ENCODE measurements at regions of chr19 and their contacts with region 1.

Region 1: GRCh38 chr19:10332955-10333757 is at the start of gene RAVER1:
- DNase-seq: peak; percentile 97 to 98 (median 98)
- H3K4me3 ChIP-seq: peak within 1 kb of the TSS; percentile 73 to 89
- H3K4me3 Mint-ChIP-seq: peak within 1 kb of the TSS; percentile 92 to 99 (median 96)
- H3K27ac ChIP-seq: peak within 1 kb of the TSS; percentile 88
- H3K27ac Mint-ChIP-seq: peak within 1 kb of the TSS; percentile 91 to 98 (median 97)
- H3K4me1 ChIP-seq: peaks cover 43% of the 10 kb centered on the region
- H3K4me1 Mint-ChIP-seq: peaks cover 7 to 57% (median 27%) of the 10 kb centered on the region in 4 donors
- H3K27me3 ChIP-seq: no peaks in the 10 kb centered on the region
- H3K27me3 Mint-ChIP-seq: no peaks in the 10 kb centered on the region
- total RNA-seq, gene RAVER1: 46.1 to 56.1 TPM

Region 2: GRCh38 chr19:9818734-9819589 is 514.2 kb before region 1 on chr19 and contains the start of gene FBXL12:
- CTCF ChIA-PET with region 1: no interaction called
- POLR2A ChIA-PET with region 1: no interaction called
- intact Hi-C with region 1: loop called (anchors 5 kb)
- DNase-seq: peak; percentile 100
- H3K4me3 ChIP-seq: peak within 1 kb of the TSS; percentile 95
- H3K4me3 Mint-ChIP-seq: peak within 1 kb of the TSS; percentile 89 to 95 (median 91)
- H3K27ac ChIP-seq: peak within 1 kb of the TSS; percentile 92
- H3K27ac Mint-ChIP-seq: peak within 1 kb of the TSS; percentile 86 to 97 (median 96)
- H3K4me1 ChIP-seq: peaks cover 19% of the 10 kb centered on the region
- H3K4me1 Mint-ChIP-seq: peaks cover 21 to 40% (median 34%) of the 10 kb centered on the region in 4 donors
- H3K27me3 ChIP-seq: no peaks in the 10 kb centered on the region
- H3K27me3 Mint-ChIP-seq: no peaks in the 10 kb centered on the region
- total RNA-seq, gene FBXL12: 27.8 to 30.7 TPM

Region 3: GRCh38 chr19:10106100-10106936 is 226.8 kb before region 1 on chr19 and contains the start of gene PPAN:
- CTCF ChIA-PET with region 1: no interaction called
- POLR2A ChIA-PET with region 1: no interaction called
- intact Hi-C with region 1: loop called (anchors 2 kb)
- DNase-seq: peak; percentile 96 to 98 (median 98)
- H3K4me3 ChIP-seq: peak within 1 kb of the TSS; percentile 58 to 74
- H3K4me3 Mint-ChIP-seq: peak within 1 kb of the TSS; percentile 72 to 92 (median 88)
- H3K27ac ChIP-seq: peak within 1 kb of the TSS; percentile 89
- H3K27ac Mint-ChIP-seq: peak within 1 kb of the TSS; percentile 95 to 100 (median 97)
- H3K4me1 ChIP-seq: peaks cover 77% of the 10 kb centered on the region
- H3K4me1 Mint-ChIP-seq: peaks cover 38 to 86% (median 59%) of the 10 kb centered on the region in 4 donors
- H3K27me3 ChIP-seq: no peaks in the 10 kb centered on the region
- H3K27me3 Mint-ChIP-seq: no peaks in the 10 kb centered on the region
- total RNA-seq, gene PPAN: 92.5 to 102 TPM

Region 4: DNA sequence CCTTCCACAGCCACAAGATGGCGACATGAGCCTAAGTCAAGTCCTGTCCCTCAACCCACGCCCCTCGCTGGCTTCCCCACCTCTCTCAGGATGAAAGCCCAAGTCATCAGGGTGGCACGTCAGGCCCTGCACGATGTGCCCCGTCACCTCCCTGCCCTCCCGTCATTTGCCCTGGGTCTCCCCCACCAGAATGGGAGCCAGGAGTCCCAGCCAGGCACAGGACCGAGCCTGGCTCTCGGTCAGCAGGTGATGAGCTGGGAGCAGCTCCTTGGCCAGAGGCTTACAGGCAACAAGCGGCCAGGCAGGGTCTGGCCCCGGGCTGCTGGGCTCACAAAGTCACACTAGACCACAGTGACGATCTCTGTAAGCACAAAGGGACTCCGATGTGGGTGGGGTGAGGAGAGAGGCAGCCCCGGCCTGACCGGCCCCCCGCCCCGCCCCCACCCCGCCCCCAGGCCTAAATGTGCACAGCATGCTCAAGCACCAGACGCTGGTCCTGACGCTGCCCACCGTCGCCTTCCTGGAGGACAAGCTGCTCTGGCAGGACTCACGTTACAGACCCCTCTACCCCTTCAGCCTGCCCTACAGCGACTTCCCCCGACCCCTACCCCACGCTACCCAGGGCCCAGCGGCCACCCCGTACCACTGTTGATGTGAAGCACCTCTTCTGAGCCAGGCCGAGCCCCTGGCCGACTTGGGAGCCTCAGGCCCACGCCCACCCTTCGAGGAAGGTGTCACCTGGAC is 73.8 kb before region 1 on chr19:
- CTCF ChIA-PET with region 1: interaction called, 18 read pairs
- POLR2A ChIA-PET with region 1: no interaction called
- intact Hi-C with region 1: no loop called
- DNase-seq: peak; percentile 82 to 94 (median 86)
- H3K4me3 ChIP-seq: no peak overlapping the region
- H3K4me3 Mint-ChIP-seq: peak overlapping the region in 1 of 8 donors; percentile 68
- H3K27ac ChIP-seq: peak overlapping the region; percentile 16
- H3K27ac Mint-ChIP-seq: peak overlapping the region in 4 of 7 donors; percentile 17 to 76 (median 54)
- H3K4me1 ChIP-seq: peaks cover 20% of the 10 kb centered on the region
- H3K4me1 Mint-ChIP-seq: peaks cover 5 to 17% (median 8%) of the 10 kb centered on the region in 4 donors
- H3K27me3 ChIP-seq: no peaks in the 10 kb centered on the region
- H3K27me3 Mint-ChIP-seq: no peaks in the 10 kb centered on the region

Region 5: GRCh38 chr19:10292206-10292788 is 40.9 kb before region 1 on chr19:
- CTCF ChIA-PET with region 1: no interaction called
- POLR2A ChIA-PET with region 1: interaction called, 7 read pairs
- intact Hi-C with region 1: loop called (anchors 2 kb)
- DNase-seq: peak; percentile 49 to 68 (median 55)
- H3K4me3 ChIP-seq: peak overlapping the region; percentile 34 to 58
- H3K4me3 Mint-ChIP-seq: peak overlapping the region; percentile 67 to 89 (median 79)
- H3K27ac ChIP-seq: no peak overlapping the region
- H3K27ac Mint-ChIP-seq: peak overlapping the region in 4 of 7 donors; percentile 37 to 89 (median 68)
- H3K4me1 ChIP-seq: peaks cover 82% of the 10 kb centered on the region
- H3K4me1 Mint-ChIP-seq: peaks cover 36 to 73% (median 56%) of the 10 kb centered on the region in 4 donors
- H3K27me3 ChIP-seq: peaks cover 67% of the 10 kb centered on the region
- H3K27me3 Mint-ChIP-seq: peaks cover 43 to 48% of the 10 kb centered on the region in 2 donors

Region 6: DNA sequence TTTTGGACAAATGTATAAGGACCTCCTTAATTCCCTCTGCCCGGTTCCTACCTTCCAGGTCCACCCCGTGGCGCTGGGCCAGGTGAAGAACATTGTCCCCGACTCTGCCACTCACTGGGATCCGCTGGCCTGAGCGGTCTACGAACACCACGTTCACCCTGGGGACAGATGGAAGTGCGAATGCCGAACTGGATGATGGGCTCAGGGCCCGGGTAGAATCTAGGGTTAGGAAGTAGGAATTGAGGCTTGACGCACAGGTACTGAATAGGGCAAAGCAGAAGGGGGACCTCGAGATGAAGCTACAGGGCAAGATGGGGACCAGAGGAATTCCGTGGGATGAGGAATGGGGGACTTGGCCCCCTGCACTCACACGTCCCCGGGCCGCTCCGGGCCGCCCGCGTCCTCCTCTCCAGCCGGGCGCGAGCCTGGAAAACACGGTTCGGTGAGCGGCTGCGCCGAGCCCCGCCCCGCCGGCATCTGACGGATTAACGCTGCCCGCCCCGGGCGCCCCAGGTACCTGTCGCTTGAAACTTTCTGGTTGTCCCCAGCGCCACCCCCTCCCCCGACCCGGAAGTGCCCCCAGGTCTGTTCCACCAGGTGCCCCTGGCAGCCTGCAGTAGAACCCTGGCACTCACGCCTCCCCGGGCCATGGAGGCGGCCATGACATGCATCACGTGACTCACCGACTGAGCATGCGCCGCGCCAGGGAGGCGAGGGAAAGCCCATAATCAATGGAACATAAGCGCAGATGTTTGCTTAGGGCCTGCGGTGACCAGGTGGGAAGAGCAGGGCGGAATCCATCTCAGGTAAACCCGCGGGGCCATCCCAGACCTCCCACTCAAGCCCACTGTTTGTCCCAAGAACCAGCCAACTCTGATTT is 17.6 kb before region 1 on chr19 and contains the start of gene FDX2:
- CTCF ChIA-PET with region 1: interaction called, 4 read pairs
- POLR2A ChIA-PET with region 1: interaction called, 13 read pairs
- intact Hi-C with region 1: loop called (anchors 1 kb)
- DNase-seq: peak; percentile 83 to 93 (median 85)
- H3K4me3 ChIP-seq: peak within 1 kb of the TSS; percentile 57 to 93
- H3K4me3 Mint-ChIP-seq: peak within 1 kb of the TSS; percentile 79 to 97 (median 90)
- H3K27ac ChIP-seq: peak within 1 kb of the TSS; percentile 52
- H3K27ac Mint-ChIP-seq: peak within 1 kb of the TSS; percentile 72 to 95 (median 90)
- H3K4me1 ChIP-seq: peaks cover 17% of the 10 kb centered on the region
- H3K4me1 Mint-ChIP-seq: peaks cover 9 to 20% (median 11%) of the 10 kb centered on the region in 4 donors
- H3K27me3 ChIP-seq: no peaks in the 10 kb centered on the region
- H3K27me3 Mint-ChIP-seq: no peaks in the 10 kb centered on the region
- total RNA-seq, gene FDX2: 10.7 to 11.3 TPM

Region 7: DNA sequence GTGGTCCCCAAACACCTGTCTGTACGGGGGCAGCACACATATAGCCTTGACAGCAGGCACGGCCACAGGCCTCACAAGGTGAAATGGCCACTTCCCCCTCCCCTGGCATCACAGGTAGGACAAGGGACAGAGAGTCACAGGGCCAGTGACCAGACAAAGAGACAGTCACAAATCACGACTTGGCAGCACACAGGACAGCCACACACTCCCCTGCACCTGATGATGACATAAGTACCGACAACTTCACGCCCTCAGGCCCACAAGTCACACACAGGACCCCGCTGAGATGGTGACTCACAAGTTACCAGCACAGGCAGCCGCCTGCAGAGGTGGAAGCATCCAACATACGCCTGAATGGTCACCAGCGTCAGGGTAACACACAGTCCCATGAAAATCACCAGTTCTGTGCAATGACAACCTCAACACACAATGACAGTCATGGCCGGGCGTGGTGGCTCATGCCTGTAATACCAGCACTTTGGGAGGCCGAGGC is 30.7 kb after region 1 on chr19:
- CTCF ChIA-PET with region 1: no interaction called
- POLR2A ChIA-PET with region 1: no interaction called
- intact Hi-C with region 1: no loop called
- DNase-seq: no peak
- H3K4me3 ChIP-seq: no peak overlapping the region
- H3K4me3 Mint-ChIP-seq: no peak overlapping the region
- H3K27ac ChIP-seq: no peak overlapping the region
- H3K27ac Mint-ChIP-seq: no peak overlapping the region
- H3K4me1 ChIP-seq: no peaks in the 10 kb centered on the region
- H3K4me1 Mint-ChIP-seq: peaks cover 0 to 3% (median under 1%) of the 10 kb centered on the region in 4 donors
- H3K27me3 ChIP-seq: no peaks in the 10 kb centered on the region
- H3K27me3 Mint-ChIP-seq: no peaks in the 10 kb centered on the region

Region 8: GRCh38 chr19:10380313-10381102 is 47.4 kb after region 1 on chr19 and contains the start of gene TYK2:
- CTCF ChIA-PET with region 1: no interaction called
- POLR2A ChIA-PET with region 1: interaction called, 23 read pairs
- intact Hi-C with region 1: loop called (anchors 1 kb)
- DNase-seq: peak; percentile 96 to 98 (median 97)
- H3K4me3 ChIP-seq: peak within 1 kb of the TSS; percentile 79 to 91
- H3K4me3 Mint-ChIP-seq: peak within 1 kb of the TSS; percentile 93 to 98 (median 96)
- H3K27ac ChIP-seq: peak within 1 kb of the TSS; percentile 89
- H3K27ac Mint-ChIP-seq: peak within 1 kb of the TSS; percentile 81 to 99 (median 98)
- H3K4me1 ChIP-seq: peaks cover 13% of the 10 kb centered on the region
- H3K4me1 Mint-ChIP-seq: peaks cover 18 to 28% (median 23%) of the 10 kb centered on the region in 4 donors
- H3K27me3 ChIP-seq: no peaks in the 10 kb centered on the region
- H3K27me3 Mint-ChIP-seq: no peaks in the 10 kb centered on the region
- total RNA-seq, gene TYK2: 297 to 314 TPM

Region 9: DNA sequence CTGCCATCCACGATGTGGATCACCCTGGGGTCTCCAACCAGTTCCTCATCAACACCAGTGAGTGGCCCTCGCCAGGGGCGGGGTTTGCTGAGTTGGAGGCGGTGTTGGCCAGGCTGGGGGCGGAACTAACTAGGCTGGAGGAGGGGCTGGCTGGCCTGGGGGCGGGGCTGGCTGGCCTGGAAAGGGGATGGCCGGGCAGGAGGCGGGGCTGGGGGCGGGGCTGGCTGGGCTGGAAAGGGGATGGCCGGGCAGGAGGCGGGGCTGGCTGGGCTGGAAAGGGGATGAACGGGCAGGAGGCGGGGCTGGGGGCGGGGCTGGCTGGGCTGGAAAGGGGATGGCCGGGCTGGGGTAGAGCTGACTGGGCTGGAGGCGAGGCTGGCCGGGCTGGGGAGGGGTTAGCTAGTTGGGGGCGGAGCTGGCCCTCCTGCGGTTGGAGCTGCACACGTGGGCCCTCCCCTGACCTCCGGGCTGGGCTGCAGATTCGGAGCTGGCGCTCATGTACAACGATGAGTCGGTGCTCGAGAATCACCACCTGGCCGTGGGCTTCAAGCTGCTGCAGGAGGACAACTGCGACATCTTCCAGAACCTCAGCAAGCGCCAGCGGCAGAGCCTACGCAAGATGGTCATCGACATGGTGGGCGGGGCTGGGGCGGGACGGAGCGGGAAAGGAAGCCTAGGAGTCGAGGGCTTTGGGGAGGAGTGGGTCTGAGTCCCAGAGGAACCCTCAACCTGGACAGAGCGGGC is 128.1 kb after region 1 on chr19:
- CTCF ChIA-PET with region 1: no interaction called
- POLR2A ChIA-PET with region 1: no interaction called
- intact Hi-C with region 1: no loop called
- DNase-seq: peak; percentile 78 to 92 (median 82)
- H3K4me3 ChIP-seq: peak overlapping the region in 1 of 2 donors; percentile 45
- H3K4me3 Mint-ChIP-seq: peak overlapping the region; percentile 47 to 78 (median 64)
- H3K27ac ChIP-seq: no peak overlapping the region
- H3K27ac Mint-ChIP-seq: peak overlapping the region in 6 of 7 donors; percentile 29 to 77 (median 56)
- H3K4me1 ChIP-seq: peaks cover 7% of the 10 kb centered on the region
- H3K4me1 Mint-ChIP-seq: peaks cover 0 to 10% (median 6%) of the 10 kb centered on the region in 4 donors
- H3K27me3 ChIP-seq: no peaks in the 10 kb centered on the region
- H3K27me3 Mint-ChIP-seq: no peaks in the 10 kb centered on the region